Heart left ventricle (tissue), 16 donors: ENCODE measurements at regions of chr3 and their contacts with region 1.

Region 1: GRCh38 chr3:39707314-39707909 is 102.0 kb upstream of the MYRIP start:
- DNase-seq: no peak
- ATAC-seq: no peak
- H3K4me3 ChIP-seq: no peak overlapping the region
- H3K27ac ChIP-seq: no peak overlapping the region
- H3K4me1 ChIP-seq: no peaks in the 10 kb centered on the region
- H3K27me3 ChIP-seq: no peaks in the 10 kb centered on the region
- CTCF ChIP-seq: peak; percentile 48 to 76 (median 72)
- POLR2A ChIP-seq: no peak

Region 2: DNA sequence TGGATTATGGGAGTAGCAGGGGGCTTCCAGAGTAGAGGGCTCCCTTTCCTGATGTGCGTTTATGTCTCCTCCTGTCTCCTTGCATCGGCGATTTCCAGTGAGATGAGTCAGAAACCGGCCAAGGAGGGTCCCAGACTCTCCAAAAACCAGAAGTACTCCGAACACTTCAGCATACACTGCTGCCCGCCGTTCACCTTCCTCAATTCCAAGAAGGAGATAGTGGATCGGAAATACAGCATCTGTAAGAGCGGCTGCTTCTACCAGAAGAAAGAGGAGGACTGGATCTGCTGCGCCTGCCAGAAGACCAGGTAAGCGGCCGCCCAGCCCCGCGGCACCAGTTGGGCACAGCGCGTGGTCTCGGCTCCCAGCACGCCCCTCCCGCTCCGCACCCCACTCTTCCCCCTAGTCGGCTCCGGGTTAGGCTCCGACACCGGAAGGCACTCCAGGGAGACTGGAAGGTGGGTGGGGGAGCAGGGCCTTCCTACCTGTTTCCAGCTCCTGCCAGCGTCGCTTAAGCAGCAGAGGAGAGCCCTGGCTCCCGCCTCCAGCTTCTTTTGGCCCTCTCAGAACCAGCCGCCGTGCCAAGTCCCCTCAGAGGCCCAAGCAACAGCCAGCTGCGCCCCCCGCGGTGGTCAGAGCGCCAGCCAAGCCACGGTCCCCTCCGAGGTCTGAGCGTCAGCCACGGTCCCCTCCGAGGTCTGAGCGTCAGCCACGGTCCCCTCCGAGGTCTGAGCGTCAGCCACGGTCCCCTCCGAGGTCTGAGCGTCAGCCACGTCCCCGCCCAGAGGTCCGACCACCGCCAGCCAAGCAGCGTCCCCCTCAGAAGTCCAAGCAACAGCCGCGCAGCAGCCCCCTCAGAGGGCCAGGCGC is 205.2 kb before region 1 on chr3:
- intact Hi-C with region 1: no loop called
- DNase-seq: no peak
- ATAC-seq: peak in 1 of 4 donors; percentile 39
- H3K4me3 ChIP-seq: peak overlapping the region in 6 of 12 donors; percentile 12 to 41 (median 24)
- H3K27ac ChIP-seq: no peak overlapping the region
- H3K4me1 ChIP-seq: peaks cover 0 to 8% (median 0%) of the 10 kb centered on the region in 12 donors
- H3K27me3 ChIP-seq: peaks cover 6 to 56% (median 23%) of the 10 kb centered on the region in 9 donors
- CTCF ChIP-seq: no peak
- POLR2A ChIP-seq: no peak

Region 3: DNA sequence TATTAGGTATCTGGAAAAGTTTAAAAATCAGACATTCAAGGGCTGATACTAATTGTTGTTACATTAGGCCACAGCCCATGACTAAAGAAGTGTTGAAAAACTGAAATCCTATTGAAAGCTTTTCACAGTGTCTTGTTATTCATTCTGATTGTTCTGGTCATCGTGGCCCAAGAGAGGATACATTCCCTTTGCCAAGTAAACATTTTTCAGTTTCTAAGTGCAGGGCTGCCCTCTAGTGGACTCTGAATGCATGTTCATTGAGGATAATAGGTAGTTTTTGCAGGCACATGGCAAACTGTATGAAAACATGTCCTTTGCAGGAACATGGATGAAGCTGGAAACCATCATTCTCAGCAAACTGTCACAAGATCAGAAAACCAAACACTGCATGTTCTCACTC is 283.1 kb after region 1 on chr3:
- intact Hi-C with region 1: loop called in 3 of 10 experiments (anchors 10 kb)
- DNase-seq: no peak
- ATAC-seq: no peak
- H3K4me3 ChIP-seq: no peak overlapping the region
- H3K27ac ChIP-seq: no peak overlapping the region
- H3K4me1 ChIP-seq: no peaks in the 10 kb centered on the region
- H3K27me3 ChIP-seq: peaks cover 0 to 5% (median 0%) of the 10 kb centered on the region in 9 donors
- CTCF ChIP-seq: peak in 8 of 12 donors; percentile 25 to 46 (median 38)
- POLR2A ChIP-seq: no peak